Breast epithelium (tissue), 4 donors: ENCODE measurements at regions of chr3 and their contacts with region 1.

Region 1: GRCh38 chr3:102069211-102069662 is 219.9 kb downstream of the NFKBIZ start:
- DNase-seq: no peak
- H3K4me3 ChIP-seq: no peak overlapping the region
- H3K27ac ChIP-seq: no peak overlapping the region
- H3K4me1 ChIP-seq: no peaks in the 10 kb centered on the region
- H3K27me3 ChIP-seq: no peaks in the 10 kb centered on the region
- CTCF ChIP-seq: no peak
- POLR2A ChIP-seq: no peak

Region 2: DNA sequence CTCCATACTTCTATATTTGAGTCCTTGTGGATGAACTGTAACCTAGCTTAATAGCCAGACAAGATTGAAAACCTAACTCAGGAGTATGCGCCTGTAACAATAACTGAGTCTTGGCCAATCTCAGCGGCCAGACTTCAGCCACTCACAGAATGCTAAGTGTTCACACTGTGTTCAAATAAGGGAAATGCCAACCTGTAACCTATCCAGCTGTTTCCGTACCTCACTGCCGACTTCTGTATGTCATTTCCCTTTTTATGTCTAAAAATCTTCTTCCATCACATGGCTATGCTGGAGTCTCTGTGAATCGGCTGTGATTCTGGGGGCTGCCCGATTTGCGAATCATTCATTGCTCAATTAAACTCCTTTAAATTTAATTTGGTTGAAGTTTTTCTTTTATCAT is 50.7 kb before region 1 on chr3:
- intact Hi-C with region 1: loop called (anchors 2 kb)
- DNase-seq: no peak
- H3K4me3 ChIP-seq: no peak overlapping the region
- H3K27ac ChIP-seq: no peak overlapping the region
- H3K4me1 ChIP-seq: no peaks in the 10 kb centered on the region
- H3K27me3 ChIP-seq: no peaks in the 10 kb centered on the region
- CTCF ChIP-seq: no peak
- POLR2A ChIP-seq: no peak